Naive thymus-derived CD4-positive, alpha-beta T cell (primary cell): ENCODE measurements at regions of chr1 and their contacts with region 1.

Region 1: DNA sequence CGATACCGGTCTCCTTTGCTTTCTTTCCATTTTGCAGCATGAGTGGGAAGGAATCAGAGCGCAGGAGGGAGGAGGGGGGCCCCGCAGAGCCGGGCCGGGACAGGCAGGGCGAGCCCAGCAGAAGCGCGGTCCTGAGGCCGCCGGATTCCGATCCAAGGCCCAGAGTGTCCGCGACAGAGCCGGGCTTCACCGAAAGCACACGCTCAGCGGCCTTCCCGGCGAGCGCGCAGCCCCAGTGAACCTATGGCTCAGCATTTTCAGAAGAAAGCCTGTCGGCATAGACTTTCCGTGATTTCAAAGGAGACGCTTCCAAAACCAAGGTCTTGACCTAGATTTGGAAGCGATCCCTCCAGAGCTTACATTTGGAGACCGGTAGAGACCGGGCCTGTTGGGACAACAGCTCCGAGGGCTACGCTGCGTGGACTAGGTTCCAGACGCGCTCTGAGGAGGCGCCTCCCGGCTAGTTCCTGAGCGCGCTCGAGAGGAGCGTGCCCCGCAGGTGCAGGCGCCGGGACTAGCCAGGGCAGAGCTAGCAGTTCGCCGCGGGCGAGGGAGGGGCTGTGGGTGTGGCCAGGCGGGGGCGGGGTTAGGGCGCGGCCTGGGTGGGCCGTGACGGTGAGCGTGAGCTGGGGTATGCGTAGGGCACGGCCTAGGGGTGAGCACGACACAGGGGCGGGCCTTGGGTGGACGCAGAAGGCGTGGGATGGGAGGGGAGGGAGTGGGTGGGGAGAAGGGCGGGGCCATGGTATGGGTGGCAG is 27.8 kb upstream of the PRSS38 start:
- DNase-seq: peak; percentile 76 to 94 (median 90)
- ATAC-seq: peak; percentile 96
- H3K4me3 ChIP-seq: peak overlapping the region; percentile 79
- H3K4me3 Mint-ChIP-seq: peak overlapping the region; percentile 81 to 89 (median 86)
- H3K27ac ChIP-seq: peak overlapping the region; percentile 23
- H3K27ac Mint-ChIP-seq: peak overlapping the region in 8 of 9 donors; percentile 23 to 84 (median 75)
- H3K4me1 ChIP-seq: peaks cover 5 to 6% of the 10 kb centered on the region in 2 donors
- H3K4me1 Mint-ChIP-seq: peaks cover 7 to 18% (median 11%) of the 10 kb centered on the region in 7 donors
- H3K27me3 ChIP-seq: no peaks in the 10 kb centered on the region
- H3K27me3 Mint-ChIP-seq: peaks cover 0 to 4% (median 0%) of the 10 kb centered on the region in 5 donors

Region 2: GRCh38 chr1:226940029-226940805 is 847.5 kb before region 1 on chr1 and contains the start of gene COQ8A:
- CTCF ChIA-PET with region 1: no interaction called
- POLR2A ChIA-PET with region 1: no interaction called
- intact Hi-C with region 1: loop called in 1 of 2 experiments (anchors 1 kb)
- DNase-seq: peak in 8 of 9 donors; percentile 99 to 100 (median 100)
- ATAC-seq: peak; percentile 95
- H3K4me3 ChIP-seq: peak within 1 kb of the TSS; percentile 84
- H3K4me3 Mint-ChIP-seq: peak within 1 kb of the TSS; percentile 85 to 94 (median 92)
- H3K27ac ChIP-seq: peak within 1 kb of the TSS; percentile 87
- H3K27ac Mint-ChIP-seq: peak within 1 kb of the TSS; percentile 94 to 98 (median 97)
- H3K4me1 ChIP-seq: peaks cover 15 to 34% of the 10 kb centered on the region in 2 donors
- H3K4me1 Mint-ChIP-seq: peaks cover 43 to 67% (median 50%) of the 10 kb centered on the region in 7 donors
- H3K27me3 ChIP-seq: no peaks in the 10 kb centered on the region
- H3K27me3 Mint-ChIP-seq: no peaks in the 10 kb centered on the region
- total RNA-seq, gene COQ8A: 34.1 to 83.4 (median 67.8) TPM

Region 3: GRCh38 chr1:227762233-227762911 is 25.3 kb before region 1 on chr1:
- CTCF ChIA-PET with region 1: interaction called, 8 read pairs
- POLR2A ChIA-PET with region 1: interaction called, 8 read pairs
- intact Hi-C with region 1: loop called (anchors 1 kb)
- DNase-seq: peak; percentile 72 to 88 (median 85)
- ATAC-seq: peak; percentile 86
- H3K4me3 ChIP-seq: peak overlapping the region; percentile 39
- H3K4me3 Mint-ChIP-seq: peak overlapping the region; percentile 39 to 80 (median 72)
- H3K27ac ChIP-seq: peak overlapping the region; percentile 57
- H3K27ac Mint-ChIP-seq: peak overlapping the region; percentile 69 to 95 (median 86)
- H3K4me1 ChIP-seq: peaks cover 56 to 61% of the 10 kb centered on the region in 2 donors
- H3K4me1 Mint-ChIP-seq: peaks cover 36 to 89% (median 67%) of the 10 kb centered on the region in 7 donors
- H3K27me3 ChIP-seq: no peaks in the 10 kb centered on the region
- H3K27me3 Mint-ChIP-seq: no peaks in the 10 kb centered on the region

Region 4: GRCh38 chr1:228082135-228082891 is 294.6 kb after region 1 on chr1 and contains the start of gene ARF1:
- CTCF ChIA-PET with region 1: no interaction called
- POLR2A ChIA-PET with region 1: no interaction called
- intact Hi-C with region 1: loop called (anchors 1 kb)
- DNase-seq: peak; percentile 89 to 99 (median 96)
- ATAC-seq: peak; percentile 97
- H3K4me3 ChIP-seq: peak within 1 kb of the TSS; percentile 88
- H3K4me3 Mint-ChIP-seq: peak within 1 kb of the TSS; percentile 89 to 97 (median 95)
- H3K27ac ChIP-seq: peak within 1 kb of the TSS; percentile 97
- H3K27ac Mint-ChIP-seq: peak within 1 kb of the TSS; percentile 76 to 97 (median 95)
- H3K4me1 ChIP-seq: peaks cover 41 to 43% of the 10 kb centered on the region in 2 donors
- H3K4me1 Mint-ChIP-seq: peaks cover 36 to 66% (median 52%) of the 10 kb centered on the region in 7 donors
- H3K27me3 ChIP-seq: no peaks in the 10 kb centered on the region
- H3K27me3 Mint-ChIP-seq: no peaks in the 10 kb centered on the region
- total RNA-seq, gene ARF1: 198 to 390 (median 259) TPM

Region 5: DNA sequence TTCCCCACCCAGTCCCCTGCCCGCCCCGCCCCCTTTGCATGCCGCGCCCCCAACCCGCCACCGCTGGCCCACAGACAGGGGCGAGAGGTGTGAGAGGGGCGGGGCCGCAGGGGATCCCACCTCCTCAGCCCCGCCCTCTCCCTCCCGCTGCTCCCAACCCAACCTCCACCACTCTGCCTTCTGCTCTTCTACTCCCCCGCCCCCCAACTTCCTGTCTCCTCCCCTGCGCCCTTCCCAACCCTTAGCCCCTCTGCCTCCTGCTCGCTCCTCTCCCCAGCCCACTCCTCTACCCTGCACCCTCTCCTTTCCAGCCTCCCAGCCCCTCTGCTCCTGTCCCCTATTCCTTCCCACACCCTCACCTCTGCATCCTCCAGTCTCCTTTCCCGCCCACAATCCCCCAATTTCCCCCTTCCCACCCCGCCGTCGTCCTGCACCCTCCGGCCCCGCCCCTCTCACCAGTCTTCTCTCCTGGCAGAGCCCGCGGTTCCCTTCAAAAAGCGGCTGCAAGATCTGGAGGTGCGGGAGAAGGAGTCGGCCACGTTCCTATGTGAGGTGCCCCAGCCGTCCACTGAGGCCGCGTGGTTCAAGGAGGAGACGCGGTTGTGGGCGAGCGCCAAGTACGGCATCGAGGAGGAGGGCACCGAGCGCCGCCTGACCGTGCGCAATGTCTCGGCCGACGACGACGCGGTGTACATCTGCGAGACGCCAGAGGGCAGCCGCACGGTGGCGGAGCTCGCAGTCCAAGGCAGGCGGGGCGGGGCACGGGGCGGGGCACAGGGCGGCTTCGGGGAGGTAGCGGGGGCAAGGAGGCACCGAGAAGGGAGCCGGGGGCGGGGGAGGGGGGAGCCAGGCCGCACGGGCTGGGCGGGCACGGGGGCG is 425.5 kb after region 1 on chr1:
- CTCF ChIA-PET with region 1: no interaction called
- POLR2A ChIA-PET with region 1: no interaction called
- intact Hi-C with region 1: loop called (anchors 1 kb)
- DNase-seq: peak; percentile 71 to 88 (median 82)
- ATAC-seq: peak; percentile 95
- H3K4me3 ChIP-seq: peak overlapping the region; percentile 68
- H3K4me3 Mint-ChIP-seq: peak overlapping the region; percentile 77 to 95 (median 91)
- H3K27ac ChIP-seq: peak overlapping the region; percentile 73
- H3K27ac Mint-ChIP-seq: peak overlapping the region; percentile 28 to 96 (median 88)
- H3K4me1 ChIP-seq: no peaks in the 10 kb centered on the region
- H3K4me1 Mint-ChIP-seq: peaks cover 3 to 13% (median 5%) of the 10 kb centered on the region in 7 donors
- H3K27me3 ChIP-seq: no peaks in the 10 kb centered on the region
- H3K27me3 Mint-ChIP-seq: no peaks in the 10 kb centered on the region

Region 6: GRCh38 chr1:229341774-229342655 is 1554.3 kb after region 1 on chr1:
- CTCF ChIA-PET with region 1: no interaction called
- POLR2A ChIA-PET with region 1: no interaction called
- intact Hi-C with region 1: loop called in 1 of 2 experiments (anchors 5 kb)
- DNase-seq: peak; percentile 78 to 87 (median 84)
- ATAC-seq: peak; percentile 92
- H3K4me3 ChIP-seq: peak overlapping the region; percentile 87
- H3K4me3 Mint-ChIP-seq: peak overlapping the region; percentile 88 to 96 (median 93)
- H3K27ac ChIP-seq: peak overlapping the region; percentile 88
- H3K27ac Mint-ChIP-seq: peak overlapping the region; percentile 72 to 93 (median 89)
- H3K4me1 ChIP-seq: peaks cover 5 to 7% of the 10 kb centered on the region in 2 donors
- H3K4me1 Mint-ChIP-seq: peaks cover 32 to 59% (median 49%) of the 10 kb centered on the region in 7 donors
- H3K27me3 ChIP-seq: no peaks in the 10 kb centered on the region
- H3K27me3 Mint-ChIP-seq: peaks cover 0 to 23% (median 7%) of the 10 kb centered on the region in 5 donors